ENCODE measurements at regions of chr20 and their contacts with region 1.

Region 1: DNA sequence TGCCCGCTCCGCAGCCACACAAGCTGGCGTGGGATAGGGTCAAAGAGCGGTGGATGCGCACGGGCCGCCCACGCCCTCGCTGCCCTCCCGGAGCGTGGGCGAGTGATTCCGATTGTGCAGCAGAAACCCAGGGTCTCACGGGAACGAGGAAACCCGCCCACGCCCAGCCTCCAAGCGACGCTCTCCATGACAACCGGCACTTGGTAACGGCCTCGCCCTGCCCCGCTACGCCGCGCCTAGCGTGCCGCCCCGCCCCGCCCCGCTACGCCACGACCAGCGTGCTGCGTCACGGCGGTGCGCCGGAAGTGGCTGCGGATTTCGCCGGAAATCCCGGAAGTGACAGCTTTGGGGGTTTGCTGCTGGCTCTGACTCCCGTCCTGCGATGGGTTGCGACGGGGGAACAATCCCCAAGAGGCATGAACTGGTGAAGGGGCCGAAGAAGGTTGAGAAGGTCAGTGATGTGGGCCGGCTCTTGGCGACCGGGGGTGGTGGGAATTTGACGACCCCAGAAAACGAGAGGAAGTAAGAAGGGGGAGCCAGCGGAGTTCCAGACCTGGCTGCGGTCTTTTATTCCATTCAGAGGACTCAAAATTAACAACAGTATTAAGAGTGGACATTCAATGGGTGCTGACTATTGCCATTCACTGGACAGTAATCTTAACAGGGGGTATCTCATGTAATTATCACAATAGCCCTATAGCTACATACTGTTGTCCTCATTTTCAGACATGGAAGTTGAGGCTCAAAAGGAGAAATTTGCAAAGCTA is at the start of gene RTF2:
- DNase-seq: peak; percentile 88 to 95
- H3K4me3 ChIP-seq: peak within 1 kb of the TSS; percentile 89 to 91
- H3K27ac ChIP-seq: peak within 1 kb of the TSS; percentile 85 to 91
- H3K4me1 ChIP-seq: peaks cover 0 to 28% (median 17%) of the 10 kb centered on the region in 4 donors
- H3K27me3 ChIP-seq: no peaks in the 10 kb centered on the region
- CTCF ChIP-seq: no peak

Region 2: DNA sequence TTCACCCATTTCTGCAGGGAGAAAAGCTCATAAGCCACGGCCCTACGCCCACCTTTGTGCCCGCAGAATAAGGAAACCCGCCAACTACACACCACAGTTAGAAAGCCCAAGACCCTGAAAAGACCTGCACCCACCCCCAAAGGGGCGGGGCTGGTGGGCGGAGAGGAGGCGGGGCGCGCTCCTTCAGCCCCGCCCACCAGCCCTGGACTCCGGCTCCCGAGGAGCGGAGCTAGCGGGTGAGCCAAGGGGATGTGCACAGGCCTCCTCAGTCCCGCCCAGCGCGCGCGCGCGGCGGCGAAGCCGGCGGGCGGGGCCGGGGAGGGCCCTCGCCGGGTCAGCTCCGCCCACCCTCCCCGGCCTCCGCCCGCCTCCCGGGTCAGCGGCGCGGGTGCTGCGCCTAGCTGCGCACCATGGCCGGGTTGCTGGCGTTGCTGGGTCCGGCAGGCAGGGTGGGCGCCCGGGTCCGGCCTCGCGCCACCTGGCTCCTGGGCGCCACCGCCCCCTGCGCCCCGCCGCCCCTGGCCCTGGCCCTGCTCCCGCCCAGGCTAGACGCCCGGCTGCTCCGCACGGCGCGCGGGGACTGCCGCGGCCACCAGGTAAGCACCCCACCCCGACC is 109.8 kb before region 1 on chr20 and contains the start of gene FAM210B:
- intact Hi-C with region 1: loop called (anchors 2 kb)
- DNase-seq: peak; percentile 84 to 93
- H3K4me3 ChIP-seq: peak within 1 kb of the TSS; percentile 77 to 84
- H3K27ac ChIP-seq: peak within 1 kb of the TSS; percentile 77 to 84
- H3K4me1 ChIP-seq: peaks cover 0 to 38% (median 16%) of the 10 kb centered on the region in 4 donors
- H3K27me3 ChIP-seq: no peaks in the 10 kb centered on the region
- CTCF ChIP-seq: no peak

Region 3: GRCh38 chr20:56392282-56393137 is 76.0 kb before region 1 on chr20 and contains the start of gene CSTF1:
- intact Hi-C with region 1: loop called (anchors 5 kb)
- DNase-seq: peak; percentile 100
- H3K4me3 ChIP-seq: peak within 1 kb of the TSS; percentile 61 to 89
- H3K27ac ChIP-seq: peak within 1 kb of the TSS; percentile 81 to 89
- H3K4me1 ChIP-seq: peaks cover 0 to 21% (median 19%) of the 10 kb centered on the region in 4 donors
- H3K27me3 ChIP-seq: no peaks in the 10 kb centered on the region
- CTCF ChIP-seq: no peak

Measured in tibial artery (tissue), 4 donors.